ENCODE measurements at regions of chr19 and their contacts with region 1.

Region 1: GRCh38 chr19:15324791-15325519 is 7.4 kb downstream of the BRD4 start:
- DNase-seq: no peak
- H3K4me3 ChIP-seq: no peak overlapping the region
- CTCF ChIP-seq: no peak

Region 2: GRCh38 chr19:15199921-15200887 is 124.8 kb before region 1 on chr19:
- in situ Hi-C with region 1: loop called (anchors 5 kb)
- DNase-seq: no peak
- H3K4me3 ChIP-seq: peak overlapping the region; percentile 58
- CTCF ChIP-seq: no peak

Region 3: GRCh38 chr19:15379083-15379995 is 54.4 kb after region 1 on chr19 and contains the start of gene AKAP8:
- in situ Hi-C with region 1: loop called (anchors 5 kb)
- DNase-seq: peak; percentile 96
- H3K4me3 ChIP-seq: peak within 1 kb of the TSS; percentile 97
- CTCF ChIP-seq: no peak

Region 4: GRCh38 chr19:15393963-15394362 is 69.0 kb after region 1 on chr19:
- in situ Hi-C with region 1: no loop called
- DNase-seq: no peak
- H3K4me3 ChIP-seq: no peak overlapping the region
- CTCF ChIP-seq: no peak

Region 5: GRCh38 chr19:15412832-15413231 is 87.9 kb after region 1 on chr19:
- in situ Hi-C with region 1: no loop called
- DNase-seq: no peak
- H3K4me3 ChIP-seq: no peak overlapping the region
- CTCF ChIP-seq: no peak

Measured in astrocyte of the cerebellum (primary cell).